Head of caudate nucleus (tissue), 42 donors: ENCODE measurements at regions of chr7 and their contacts with region 1.

Region 1: DNA sequence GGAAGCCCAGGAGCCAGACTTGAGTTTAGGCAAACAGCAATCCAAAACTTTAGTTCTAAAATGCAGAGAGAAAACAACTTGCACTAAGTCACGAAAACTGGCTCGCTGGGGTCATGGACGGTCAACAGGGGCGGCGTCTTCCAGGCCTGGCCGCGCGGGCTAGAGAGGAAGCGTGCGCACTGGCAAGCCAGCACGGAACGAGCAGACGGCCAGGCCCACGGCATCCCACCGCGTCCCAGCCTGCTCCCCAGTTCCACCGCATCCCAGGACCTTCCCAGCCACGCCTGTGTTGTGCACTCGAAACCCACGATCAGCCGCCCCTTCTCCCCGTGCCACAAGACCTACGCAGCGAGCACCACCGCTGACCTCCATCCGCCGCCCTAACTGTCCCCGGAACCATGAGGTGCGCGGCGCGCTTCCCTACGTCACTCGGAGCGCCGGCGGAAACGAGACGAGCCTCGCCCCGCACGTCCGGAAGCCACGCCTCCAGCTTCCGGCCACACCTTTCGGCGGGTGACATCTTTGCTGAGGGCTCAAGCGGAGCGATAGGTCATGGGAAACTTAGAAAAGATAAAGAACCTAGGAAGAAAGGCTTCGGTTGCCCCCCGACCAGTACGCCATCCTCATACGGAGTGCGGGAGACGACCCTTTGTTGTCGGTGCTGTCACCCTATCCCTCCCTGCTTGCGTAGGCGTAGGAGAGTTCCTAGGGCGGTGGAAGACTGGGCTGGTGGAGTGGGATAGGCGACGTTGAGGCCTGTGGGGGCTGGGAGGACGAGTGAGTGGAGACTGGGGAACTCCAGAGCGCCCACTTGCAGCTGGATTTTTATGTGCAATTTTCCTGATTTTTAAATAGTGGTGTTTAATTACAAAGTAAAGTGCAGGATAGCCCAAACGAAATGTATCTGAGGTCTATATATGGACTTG is at the start of gene TBRG4:
- DNase-seq: peak; percentile 82 to 98 (median 95)

Region 2: DNA sequence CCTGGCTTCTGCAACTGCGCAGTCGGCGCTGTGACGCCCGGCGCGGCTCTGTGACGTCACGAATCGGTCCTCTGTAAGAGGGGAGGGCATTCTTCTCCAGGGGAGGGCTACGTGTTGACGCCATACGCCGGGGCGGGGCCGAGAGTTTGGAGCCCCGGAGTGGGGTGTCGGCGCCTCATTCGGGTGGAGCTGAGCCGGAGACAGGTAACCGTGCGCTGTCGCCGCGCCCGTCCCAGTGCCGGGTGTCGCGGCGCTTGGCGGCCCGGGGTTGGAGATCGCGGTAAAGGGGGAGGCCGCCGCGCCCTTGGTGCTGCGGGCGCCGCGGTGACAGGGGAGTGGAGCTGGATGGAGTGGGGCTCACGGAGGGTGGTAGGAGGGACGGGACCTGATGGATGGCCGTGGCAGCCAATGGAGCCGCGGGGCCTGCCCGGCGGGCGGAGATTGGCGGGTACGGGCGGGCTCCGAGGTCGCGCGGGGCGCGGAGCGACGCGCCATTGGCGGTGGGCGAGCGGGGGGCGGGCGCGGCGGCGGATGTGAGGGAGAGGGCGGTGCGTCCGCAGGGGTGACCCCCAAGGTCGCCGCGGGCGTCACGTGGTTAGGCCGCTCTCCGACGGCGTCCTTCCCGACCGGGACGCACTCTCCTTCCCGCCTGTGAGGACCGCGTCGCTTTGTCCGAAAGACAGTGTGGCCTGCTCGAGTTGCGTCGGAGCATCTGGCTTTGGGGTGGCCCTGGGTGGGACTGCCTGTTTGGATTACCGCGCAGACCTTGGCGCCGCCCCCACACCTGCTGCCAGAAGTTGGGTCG is 504.9 kb before region 1 on chr7 and contains the start of gene OGDH:
- intact Hi-C with region 1: loop called (anchors 10 kb)
- DNase-seq: peak; percentile 98 to 100 (median 99)

Region 3: DNA sequence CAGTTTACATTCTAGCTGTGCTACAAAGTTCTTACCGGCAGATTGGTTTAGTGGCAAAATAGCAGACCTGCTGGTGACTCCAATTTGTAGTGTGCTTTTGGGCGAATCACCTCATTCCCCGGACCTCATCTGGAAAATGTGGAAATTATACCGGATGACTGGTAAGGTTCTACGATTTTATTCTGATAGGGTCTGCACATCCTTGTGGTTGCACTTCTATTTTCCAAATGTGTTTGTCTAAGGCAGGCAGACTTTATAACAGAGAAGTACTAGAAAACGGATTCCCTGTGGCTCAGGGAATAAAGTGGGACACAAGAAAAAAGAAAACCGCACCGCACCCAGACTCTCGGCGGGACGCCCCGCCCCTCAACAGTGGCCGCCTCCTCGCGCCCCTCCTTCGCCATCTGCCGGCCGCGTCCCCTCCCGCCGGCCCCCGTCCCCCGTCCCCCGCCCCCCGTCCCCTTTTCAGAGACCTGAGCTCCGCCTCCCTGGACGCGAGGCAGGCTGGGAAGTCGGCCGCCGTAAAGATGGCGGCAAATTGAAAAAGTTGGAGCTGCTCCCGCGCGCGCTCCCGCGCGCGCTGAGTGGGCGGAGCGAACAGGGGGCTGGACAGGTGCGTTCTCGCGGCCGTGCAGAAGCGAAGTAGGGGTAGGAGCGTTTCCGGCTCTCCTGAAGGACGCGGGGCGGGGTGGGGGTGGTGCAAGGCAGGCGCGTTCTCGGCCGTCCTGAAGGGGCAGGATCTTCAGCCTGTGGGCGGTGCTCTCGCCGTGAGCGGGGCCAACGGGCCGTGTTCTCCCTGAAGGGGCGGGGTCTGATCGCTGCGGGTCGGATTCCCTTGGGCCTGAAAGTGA is 112.1 kb before region 1 on chr7:
- intact Hi-C with region 1: loop called (anchors 5 kb)
- DNase-seq: peak; percentile 91 to 100 (median 99)